Dendritic cell treated with granulocyte-macrophage colony-stimulating factor and Interleukin-4, amounts not matched to agents 40 ng/mL and 50 ng/mL, for 4 days (primary cell): ENCODE measurements at regions of chrX and their contacts with region 1.

Region 1: GRCh38 chrX:41116948-41117347 is 31.7 kb downstream of the USP9X start:
- H3K4me3 Mint-ChIP-seq: no peak overlapping the region
- H3K27ac Mint-ChIP-seq: no peak overlapping the region
- H3K4me1 Mint-ChIP-seq: peaks cover 22% of the 10 kb centered on the region
- H3K27me3 Mint-ChIP-seq: no peaks in the 10 kb centered on the region

Region 2: GRCh38 chrX:40539214-40540142 is 577.5 kb before region 1 on chrX:
- intact Hi-C with region 1: loop called (anchors 10 kb)
- H3K4me3 Mint-ChIP-seq: peak overlapping the region; percentile 42
- H3K27ac Mint-ChIP-seq: peak overlapping the region; percentile 88
- H3K4me1 Mint-ChIP-seq: peaks cover 45% of the 10 kb centered on the region
- H3K27me3 Mint-ChIP-seq: peaks cover 2% of the 10 kb centered on the region

Region 3: GRCh38 chrX:40877887-40878286 is 239.1 kb before region 1 on chrX:
- intact Hi-C with region 1: loop called (anchors 2 kb)
- H3K4me3 Mint-ChIP-seq: no peak overlapping the region
- H3K27ac Mint-ChIP-seq: no peak overlapping the region
- H3K4me1 Mint-ChIP-seq: no peaks in the 10 kb centered on the region
- H3K27me3 Mint-ChIP-seq: no peaks in the 10 kb centered on the region